ENCODE measurements at regions of chr17 and their contacts with region 1.

Region 1: DNA sequence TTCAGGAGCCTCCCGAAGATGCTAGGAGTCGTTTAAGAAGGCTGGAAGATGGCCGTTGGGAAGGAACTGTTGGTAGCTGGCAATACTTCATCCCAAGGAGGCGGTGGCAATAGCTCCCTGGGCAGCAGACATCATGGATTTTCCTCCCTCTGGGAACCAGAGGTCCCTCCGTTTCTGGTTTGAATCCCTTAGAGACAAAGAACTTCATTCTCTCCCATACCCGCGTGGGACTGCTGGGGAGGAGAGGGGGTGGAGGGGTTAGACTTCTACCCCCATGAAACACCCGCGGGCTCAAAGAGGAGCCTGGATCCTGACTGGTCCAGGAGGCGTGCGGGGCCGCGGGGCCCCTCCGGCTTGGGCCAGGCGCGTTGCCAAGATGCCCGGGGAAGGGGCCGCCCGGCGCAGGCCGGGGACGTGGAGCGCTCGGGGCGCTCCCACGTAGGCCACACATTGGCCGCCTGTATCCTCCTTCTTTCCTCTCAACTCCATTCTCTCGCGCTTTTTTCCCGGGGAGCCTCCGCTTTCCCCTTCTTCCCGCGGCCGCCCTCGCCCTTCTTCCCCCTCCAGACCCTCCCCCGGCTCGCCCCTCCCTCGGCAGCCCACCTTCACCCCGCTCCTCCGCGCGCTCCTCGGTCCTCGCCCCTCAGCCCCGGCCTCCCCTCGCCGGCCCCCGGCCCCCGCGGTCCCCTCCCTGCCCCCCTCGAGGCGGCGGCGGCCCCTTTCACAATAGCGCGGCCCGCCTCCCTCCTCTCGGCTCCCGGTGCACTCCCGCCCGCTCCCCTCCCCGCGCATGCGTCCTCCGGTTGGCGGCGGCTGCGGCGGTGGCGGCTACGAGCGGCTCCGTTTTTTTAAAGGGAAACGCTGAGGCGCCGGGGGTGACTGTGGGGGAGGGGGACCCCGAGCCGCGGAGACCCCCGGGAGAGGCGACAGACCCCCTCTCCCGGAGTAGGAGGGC is at the start of gene MSL1:
- DNase-seq: peak; percentile 95
- ATAC-seq: peak; percentile 89
- total RNA-seq, gene MSL1: 51.4 TPM

Region 2: GRCh38 chr17:40139566-40140058 is 18.2 kb after region 1 on chr17:
- intact Hi-C with region 1: loop called (anchors 2 kb)
- DNase-seq: no peak
- ATAC-seq: no peak

Region 3: GRCh38 chr17:40158438-40159013 is 37.1 kb after region 1 on chr17:
- intact Hi-C with region 1: no loop called
- DNase-seq: no peak
- ATAC-seq: no peak

Region 4: DNA sequence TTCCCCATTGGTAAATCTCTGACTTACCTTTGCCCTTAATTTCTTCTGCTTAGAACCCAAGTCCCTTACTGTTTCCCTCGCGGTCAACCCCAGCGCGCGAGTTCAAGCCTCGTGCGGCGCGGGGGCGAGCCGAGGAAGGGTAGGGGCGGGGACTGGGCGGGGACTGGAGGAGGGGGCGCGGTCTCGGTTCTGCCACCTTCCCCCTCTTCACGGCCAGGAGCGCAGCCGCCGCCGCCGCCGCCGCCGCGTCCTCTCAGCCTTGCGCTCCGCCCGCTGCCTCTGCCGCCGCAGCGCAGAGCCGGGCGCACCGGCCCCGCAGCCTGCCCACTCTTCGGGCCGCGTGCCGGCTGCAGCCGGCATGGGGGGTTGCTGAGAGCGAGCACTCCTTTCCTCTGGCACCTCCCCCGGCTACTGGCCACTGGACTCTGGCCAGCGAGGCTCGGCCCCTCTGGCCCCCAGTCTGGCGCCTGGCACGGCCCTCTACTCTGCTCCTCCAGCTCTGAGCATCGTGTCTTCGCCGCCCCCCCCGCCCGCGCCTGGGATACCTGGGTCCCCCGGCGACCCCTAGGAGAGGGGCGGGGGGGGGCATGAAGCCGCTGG is 55.9 kb after region 1 on chr17 and contains the start of gene RAPGEFL1:
- intact Hi-C with region 1: loop called (anchors 5 kb)
- DNase-seq: peak; percentile 89
- ATAC-seq: peak; percentile 85
- total RNA-seq, gene RAPGEFL1: 2.1 TPM

Region 5: GRCh38 chr17:40191237-40192208 is 70.1 kb after region 1 on chr17:
- intact Hi-C with region 1: no loop called
- DNase-seq: peak; percentile 89
- ATAC-seq: peak; percentile 85

Measured in Right ventricle myocardium inferior (tissue), 1 donor.